Posterior cingulate gyrus (tissue), 11 donors: ENCODE measurements at regions of chr2 and their contacts with region 1.

Region 1: DNA sequence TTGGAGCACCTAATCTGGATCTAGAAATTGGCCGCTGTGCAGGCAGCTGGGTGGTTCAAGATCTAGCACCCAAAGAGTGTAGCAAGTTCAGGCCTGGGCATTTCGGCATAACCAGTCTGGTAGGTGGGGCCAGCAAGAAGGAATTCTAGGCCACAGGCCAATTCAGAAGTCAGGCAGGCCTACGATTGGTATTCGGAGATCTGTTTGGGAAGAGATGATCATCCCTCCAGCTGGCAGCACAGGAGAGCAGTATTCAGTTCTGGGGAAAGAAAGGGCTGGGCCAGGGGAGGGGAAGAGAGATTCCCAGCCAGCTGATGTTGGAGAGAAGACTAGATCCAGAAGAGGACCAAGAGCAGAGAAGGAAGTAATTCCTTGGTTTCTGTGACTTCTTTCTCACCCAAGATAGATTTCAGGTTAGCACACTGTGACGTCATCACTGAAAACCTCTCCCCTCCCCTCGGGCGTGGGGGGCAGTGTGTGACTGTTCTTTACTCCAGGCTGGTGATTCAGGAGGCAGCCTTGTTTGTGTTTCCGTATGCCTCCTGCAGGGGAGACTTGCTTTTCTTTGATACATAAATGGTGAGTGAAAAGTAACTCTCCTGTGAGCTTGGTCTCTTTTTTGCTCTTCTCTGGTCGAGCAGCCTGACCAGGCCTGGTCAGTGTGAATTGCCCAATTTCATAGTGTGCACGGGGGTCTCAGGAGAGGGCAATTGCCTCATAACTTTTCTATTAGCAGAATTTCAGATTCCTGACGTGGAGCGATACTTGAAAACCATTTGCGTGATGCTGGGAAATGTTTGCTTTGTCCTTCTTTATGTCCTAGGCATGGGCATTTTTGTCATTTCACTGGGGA is 61.1 kb downstream of the MEIS1 start:
- DNase-seq: peak in 1 of 10 donors; percentile 14

Region 2: GRCh38 chr2:66439812-66440542 is 56.0 kb before region 1 on chr2:
- intact Hi-C with region 1: loop called (anchors 5 kb)
- DNase-seq: peak in 1 of 10 donors; percentile 70